Heart left ventricle (tissue), 16 donors: ENCODE measurements at regions of chr3 and their contacts with region 1.

Region 1: DNA sequence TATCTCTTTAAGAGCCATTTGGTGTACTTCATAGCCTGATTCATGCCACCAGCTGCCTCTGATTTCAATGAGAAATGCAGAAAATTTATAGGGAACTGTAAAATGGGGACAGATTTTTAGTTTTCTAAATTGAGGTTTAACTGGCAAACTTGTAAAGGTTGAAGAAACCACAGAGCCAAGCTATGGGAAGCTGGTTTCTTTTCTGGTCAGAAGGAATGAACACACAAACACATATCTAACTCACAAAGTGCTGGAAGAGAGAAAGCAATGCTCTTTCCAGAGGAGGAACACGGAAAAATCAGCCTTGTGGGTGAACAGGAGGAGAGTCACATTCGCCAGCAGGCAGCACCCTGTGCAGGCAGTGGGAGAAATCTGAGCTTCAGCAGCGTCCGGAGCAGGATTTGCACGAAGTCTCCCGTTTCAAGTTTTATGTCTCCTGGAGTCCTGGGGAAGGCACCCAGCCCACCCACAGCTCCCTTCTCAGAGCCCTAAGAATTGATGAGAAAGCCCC is 481 bp downstream of the MASP1 start:
- DNase-seq: peak in 2 of 5 donors; percentile 19 to 25
- ATAC-seq: peak; percentile 32 to 47 (median 37)
- H3K4me3 ChIP-seq: peak overlapping the region; percentile 26 to 68 (median 54)
- H3K27ac ChIP-seq: peak overlapping the region; percentile 69 to 91 (median 78)
- H3K4me1 ChIP-seq: peaks cover 0 to 53% (median 25%) of the 10 kb centered on the region in 12 donors
- H3K27me3 ChIP-seq: no peaks in the 10 kb centered on the region
- CTCF ChIP-seq: no peak
- POLR2A ChIP-seq: no peak

Region 2: GRCh38 chr3:187227658-187228258 is 63.3 kb before region 1 on chr3:
- intact Hi-C with region 1: loop called in 5 of 10 experiments (anchors 5 to 10 kb)
- DNase-seq: no peak
- ATAC-seq: no peak
- H3K4me3 ChIP-seq: no peak overlapping the region
- H3K27ac ChIP-seq: no peak overlapping the region
- H3K4me1 ChIP-seq: no peaks in the 10 kb centered on the region
- H3K27me3 ChIP-seq: no peaks in the 10 kb centered on the region
- CTCF ChIP-seq: no peak
- POLR2A ChIP-seq: no peak

Region 3: DNA sequence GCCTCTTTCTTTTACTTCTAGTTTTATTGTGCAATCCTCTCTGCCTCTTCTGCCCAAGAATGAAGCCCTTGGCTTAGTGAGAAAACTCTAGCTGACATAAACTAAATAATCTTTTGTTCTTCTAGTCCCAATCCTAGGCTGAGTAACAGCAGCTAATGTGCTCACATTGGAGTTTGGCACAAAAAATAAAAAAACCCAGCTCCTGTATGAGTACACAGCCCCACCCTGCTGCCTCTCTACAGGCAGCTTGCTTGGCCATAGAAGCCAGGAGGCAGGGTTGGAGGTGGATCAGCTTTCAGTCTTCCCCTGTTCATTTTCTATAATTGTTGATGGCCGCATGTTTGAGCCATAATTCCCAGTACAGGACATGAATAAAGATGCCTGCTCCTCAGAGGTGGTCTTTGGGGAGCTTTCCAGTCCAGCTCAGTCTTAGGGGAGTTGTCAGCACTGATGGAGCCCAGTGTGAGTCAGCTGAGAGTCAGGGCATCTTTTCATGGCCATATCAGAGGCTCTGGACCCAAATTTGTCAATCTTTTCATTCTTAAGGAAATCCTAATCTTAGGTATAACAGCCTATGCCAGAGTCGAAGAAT is 47.0 kb before region 1 on chr3:
- intact Hi-C with region 1: no loop called
- DNase-seq: peak in 1 of 5 donors; percentile 44
- ATAC-seq: peak; percentile 44 to 64 (median 58)
- H3K4me3 ChIP-seq: no peak overlapping the region
- H3K27ac ChIP-seq: peak overlapping the region in 1 of 12 donors; percentile 25
- H3K4me1 ChIP-seq: no peaks in the 10 kb centered on the region
- H3K27me3 ChIP-seq: no peaks in the 10 kb centered on the region
- CTCF ChIP-seq: no peak
- POLR2A ChIP-seq: no peak

Region 4: GRCh38 chr3:187255314-187255713 is 35.7 kb before region 1 on chr3:
- intact Hi-C with region 1: loop called in 1 of 10 experiments (anchors 5 kb)
- DNase-seq: no peak
- ATAC-seq: no peak
- H3K4me3 ChIP-seq: no peak overlapping the region
- H3K27ac ChIP-seq: no peak overlapping the region
- H3K4me1 ChIP-seq: peaks cover 0 to 14% (median 0%) of the 10 kb centered on the region in 12 donors
- H3K27me3 ChIP-seq: no peaks in the 10 kb centered on the region
- CTCF ChIP-seq: no peak
- POLR2A ChIP-seq: no peak

Region 5: DNA sequence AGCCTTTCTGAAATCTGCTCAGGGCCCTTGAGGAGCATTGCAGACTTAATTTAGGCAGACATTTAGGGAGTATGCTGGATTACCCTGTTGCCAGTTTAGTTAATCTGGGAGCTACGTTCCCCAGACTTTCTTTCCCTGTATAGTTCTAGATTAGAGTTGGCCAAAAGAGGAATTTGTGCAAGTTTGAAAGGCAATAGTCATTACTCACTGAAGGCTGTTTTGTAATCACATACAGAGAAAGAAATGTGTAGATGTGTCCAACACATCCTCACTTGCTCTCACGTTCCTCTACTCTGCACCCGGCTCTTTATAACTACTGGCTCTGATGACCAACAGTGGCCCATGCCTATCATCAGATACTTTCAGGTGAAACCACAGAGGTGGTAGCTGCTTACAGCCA is 23.8 kb before region 1 on chr3:
- intact Hi-C with region 1: loop called in 3 of 10 experiments (anchors 1 to 2 kb)
- DNase-seq: no peak
- ATAC-seq: no peak
- H3K4me3 ChIP-seq: no peak overlapping the region
- H3K27ac ChIP-seq: peak overlapping the region in 3 of 12 donors; percentile 18 to 50 (median 26)
- H3K4me1 ChIP-seq: peaks cover 3 to 40% (median 29%) of the 10 kb centered on the region in 12 donors
- H3K27me3 ChIP-seq: no peaks in the 10 kb centered on the region
- CTCF ChIP-seq: no peak
- POLR2A ChIP-seq: no peak